CD4-positive, alpha-beta memory T cell (primary cell): ENCODE measurements at regions of chr18 and their contacts with region 1.

Region 1: DNA sequence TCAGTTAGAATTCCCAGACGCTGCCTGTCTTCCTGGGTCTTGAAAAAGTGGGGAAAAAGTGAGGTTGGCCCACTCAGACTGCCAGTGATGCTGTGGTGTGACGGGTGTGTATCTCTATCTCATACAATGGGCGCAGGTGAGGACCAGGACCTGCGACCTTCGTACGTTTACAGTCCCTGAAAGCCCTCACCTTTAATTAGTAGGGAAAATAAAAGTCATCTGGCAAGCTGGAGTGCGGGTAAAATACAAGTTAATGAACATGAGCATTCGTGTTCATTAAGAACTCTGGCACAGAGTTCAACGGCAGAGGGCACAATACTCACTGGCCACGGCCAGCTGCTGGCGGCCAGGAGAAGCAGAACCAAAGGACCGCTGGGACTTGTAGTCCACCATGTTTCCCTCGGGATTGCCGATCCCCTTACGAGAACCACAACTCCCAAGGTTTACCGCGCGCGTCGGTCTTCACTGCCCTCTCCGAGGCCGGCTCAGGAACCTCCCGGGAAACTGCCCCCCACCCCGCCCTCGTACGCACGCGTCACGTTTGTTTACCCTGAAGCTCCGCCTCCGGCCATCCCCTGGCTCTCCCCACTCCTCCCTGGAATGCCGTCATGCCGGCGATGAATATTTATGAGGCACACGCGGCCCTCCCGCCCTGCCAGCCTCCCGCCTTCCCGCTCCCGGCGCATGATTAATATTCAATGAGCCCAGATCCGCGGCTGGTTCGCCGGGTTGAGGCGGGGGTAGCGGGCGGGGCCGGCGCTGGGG is 488 bp upstream of the PHLPP1 start:
- DNase-seq: peak; percentile 89 to 93 (median 92)
- H3K4me3 ChIP-seq: peak overlapping the region; percentile 8 to 71
- H3K4me3 Mint-ChIP-seq: peak overlapping the region; percentile 87 to 97 (median 92)
- H3K27ac ChIP-seq: peak overlapping the region; percentile 76
- H3K27ac Mint-ChIP-seq: peak overlapping the region; percentile 93 to 99 (median 98)
- H3K4me1 ChIP-seq: peaks cover 25% of the 10 kb centered on the region
- H3K4me1 Mint-ChIP-seq: peaks cover 19 to 39% (median 24%) of the 10 kb centered on the region in 4 donors
- H3K27me3 ChIP-seq: no peaks in the 10 kb centered on the region
- H3K27me3 Mint-ChIP-seq: no peaks in the 10 kb centered on the region

Region 2: DNA sequence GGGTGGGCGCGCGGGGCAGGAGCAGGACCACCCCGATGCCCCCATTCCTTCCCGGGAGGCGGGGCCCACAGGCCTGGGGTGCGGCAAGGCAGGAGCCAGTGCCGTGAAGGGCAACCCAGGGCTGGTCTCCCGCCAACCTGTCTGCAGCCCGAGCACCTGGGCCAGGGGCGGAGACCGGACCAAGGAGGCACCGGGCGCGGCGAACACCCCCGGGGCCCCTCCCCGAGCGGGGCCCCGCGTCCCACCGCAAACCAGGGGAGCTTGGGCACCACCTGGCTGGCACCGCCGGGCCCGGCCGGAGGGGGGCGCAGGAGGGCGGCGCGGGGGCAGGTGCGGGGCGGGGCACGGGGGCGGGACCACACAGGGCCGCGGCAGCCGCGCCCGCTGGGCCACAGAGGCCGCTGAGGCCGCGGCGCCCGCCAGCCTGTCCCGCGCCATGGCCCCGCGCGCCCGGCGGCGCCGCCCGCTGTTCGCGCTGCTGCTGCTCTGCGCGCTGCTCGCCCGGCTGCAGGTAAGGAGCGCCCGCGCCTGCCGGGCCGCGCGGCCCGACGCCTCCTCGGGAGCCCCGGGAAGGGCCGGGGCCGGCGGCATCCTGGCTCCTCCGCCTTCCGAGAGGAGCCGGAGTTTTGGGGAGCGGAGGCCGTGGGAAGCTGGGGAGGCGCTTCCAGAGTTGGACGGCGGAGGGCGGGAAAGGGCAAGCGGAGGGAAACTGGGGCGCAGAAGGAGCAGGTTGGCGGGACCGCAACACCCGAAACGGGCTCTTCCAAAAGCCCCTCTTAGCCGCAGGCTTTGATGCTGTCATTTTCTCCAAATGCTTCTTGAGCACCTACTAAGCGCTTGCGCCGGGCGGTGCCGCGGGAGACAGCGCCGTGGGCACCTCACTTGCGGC is 389.7 kb before region 1 on chr18 and contains the start of gene TNFRSF11A:
- CTCF ChIA-PET with region 1: no interaction called
- POLR2A ChIA-PET with region 1: no interaction called
- intact Hi-C with region 1: loop called (anchors 1 kb)
- DNase-seq: peak; percentile 46 to 60 (median 51)
- H3K4me3 ChIP-seq: peak within 1 kb of the TSS; percentile 22 to 58
- H3K4me3 Mint-ChIP-seq: peak within 1 kb of the TSS; percentile 70 to 92 (median 86)
- H3K27ac ChIP-seq: no peak within 1 kb of the TSS
- H3K27ac Mint-ChIP-seq: peak within 1 kb of the TSS in 5 of 7 donors; percentile 20 to 91 (median 82)
- H3K4me1 ChIP-seq: peaks cover 19% of the 10 kb centered on the region
- H3K4me1 Mint-ChIP-seq: peaks cover 15 to 40% (median 26%) of the 10 kb centered on the region in 4 donors
- H3K27me3 ChIP-seq: peaks cover 35% of the 10 kb centered on the region
- H3K27me3 Mint-ChIP-seq: peaks cover 53 to 57% of the 10 kb centered on the region in 2 donors
- total RNA-seq, gene TNFRSF11A: 1.3 TPM

Region 3: GRCh38 chr18:62522504-62523254 is 192.2 kb before region 1 on chr18 and contains the start of gene ZCCHC2:
- CTCF ChIA-PET with region 1: no interaction called
- POLR2A ChIA-PET with region 1: interaction called, 23 read pairs
- intact Hi-C with region 1: loop called (anchors 1 kb)
- DNase-seq: peak; percentile 97 to 100 (median 98)
- H3K4me3 ChIP-seq: peak within 1 kb of the TSS; percentile 38 to 98
- H3K4me3 Mint-ChIP-seq: peak within 1 kb of the TSS; percentile 90 to 99 (median 96)
- H3K27ac ChIP-seq: peak within 1 kb of the TSS; percentile 93
- H3K27ac Mint-ChIP-seq: peak within 1 kb of the TSS; percentile 80 to 96 (median 87)
- H3K4me1 ChIP-seq: peaks cover 34% of the 10 kb centered on the region
- H3K4me1 Mint-ChIP-seq: peaks cover 21 to 45% (median 32%) of the 10 kb centered on the region in 4 donors
- H3K27me3 ChIP-seq: no peaks in the 10 kb centered on the region
- H3K27me3 Mint-ChIP-seq: no peaks in the 10 kb centered on the region
- total RNA-seq, gene ZCCHC2: 51.7 to 52.2 TPM

Region 4: GRCh38 chr18:62957885-62958472 is 243.1 kb after region 1 on chr18:
- CTCF ChIA-PET with region 1: interaction called, 8 read pairs
- POLR2A ChIA-PET with region 1: interaction called, 3 read pairs
- intact Hi-C with region 1: loop called (anchors 1 kb)
- DNase-seq: peak; percentile 18 to 35 (median 33)
- H3K4me3 ChIP-seq: no peak overlapping the region
- H3K4me3 Mint-ChIP-seq: no peak overlapping the region
- H3K27ac ChIP-seq: no peak overlapping the region
- H3K27ac Mint-ChIP-seq: no peak overlapping the region
- H3K4me1 ChIP-seq: no peaks in the 10 kb centered on the region
- H3K4me1 Mint-ChIP-seq: peaks cover 0 to 9% (median 1%) of the 10 kb centered on the region in 4 donors
- H3K27me3 ChIP-seq: no peaks in the 10 kb centered on the region
- H3K27me3 Mint-ChIP-seq: no peaks in the 10 kb centered on the region

Region 5: GRCh38 chr18:63339920-63340484 is 625.1 kb after region 1 on chr18:
- CTCF ChIA-PET with region 1: no interaction called
- POLR2A ChIA-PET with region 1: no interaction called
- intact Hi-C with region 1: loop called (anchors 2 kb)
- DNase-seq: peak in 4 of 5 donors; percentile 43 to 51 (median 49)
- H3K4me3 ChIP-seq: no peak overlapping the region
- H3K4me3 Mint-ChIP-seq: no peak overlapping the region
- H3K27ac ChIP-seq: no peak overlapping the region
- H3K27ac Mint-ChIP-seq: peak overlapping the region in 3 of 7 donors; percentile 43 to 69 (median 69)
- H3K4me1 ChIP-seq: no peaks in the 10 kb centered on the region
- H3K4me1 Mint-ChIP-seq: peaks cover 0 to 7% (median 1%) of the 10 kb centered on the region in 4 donors
- H3K27me3 ChIP-seq: no peaks in the 10 kb centered on the region
- H3K27me3 Mint-ChIP-seq: no peaks in the 10 kb centered on the region

Region 6: DNA sequence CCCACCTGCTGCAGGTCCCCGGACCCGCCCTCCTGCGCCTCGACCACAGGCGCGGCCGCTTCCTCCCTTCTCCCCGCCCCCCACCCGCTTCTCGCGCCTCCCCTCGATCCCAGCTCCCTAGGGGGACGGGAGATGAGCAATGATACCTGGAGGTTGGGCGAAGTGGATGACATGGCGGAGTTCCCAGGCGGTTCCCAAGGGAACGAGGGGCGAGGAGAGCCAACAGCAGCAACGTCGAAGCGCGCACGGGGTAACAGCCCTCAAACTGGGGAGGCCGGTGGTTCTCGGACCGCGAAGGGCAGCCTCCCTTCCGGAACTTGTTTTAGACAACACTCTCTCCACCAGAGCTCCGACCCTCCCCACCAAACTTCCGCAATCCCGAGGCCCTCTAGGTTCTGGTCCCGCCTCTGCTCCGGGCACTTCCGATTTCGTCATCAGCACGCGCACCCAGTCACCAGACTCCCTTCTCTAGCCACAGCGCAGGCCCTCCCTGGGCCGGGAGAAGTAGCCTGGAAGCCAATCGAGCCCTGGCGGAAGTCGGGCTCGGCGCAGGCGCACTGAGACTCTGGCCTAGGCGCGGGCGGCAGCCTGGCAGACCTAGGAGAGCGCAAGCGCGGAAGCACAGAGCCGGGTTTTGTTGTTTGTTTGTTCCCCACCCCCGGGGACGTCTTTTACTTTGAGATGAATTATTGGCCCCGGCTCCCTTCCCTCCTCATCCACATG is 707.4 kb after region 1 on chr18 and contains the start of gene VPS4B:
- CTCF ChIA-PET with region 1: no interaction called
- POLR2A ChIA-PET with region 1: interaction called, 22 read pairs
- intact Hi-C with region 1: loop called (anchors 1 kb)
- DNase-seq: peak; percentile 99 to 100 (median 100)
- H3K4me3 ChIP-seq: peak within 1 kb of the TSS; percentile 73 to 98
- H3K4me3 Mint-ChIP-seq: peak within 1 kb of the TSS; percentile 94 to 100 (median 96)
- H3K27ac ChIP-seq: peak within 1 kb of the TSS; percentile 98
- H3K27ac Mint-ChIP-seq: peak within 1 kb of the TSS; percentile 94 to 99 (median 97)
- H3K4me1 ChIP-seq: peaks cover 55% of the 10 kb centered on the region
- H3K4me1 Mint-ChIP-seq: peaks cover 19 to 29% (median 21%) of the 10 kb centered on the region in 4 donors
- H3K27me3 ChIP-seq: no peaks in the 10 kb centered on the region
- H3K27me3 Mint-ChIP-seq: peaks cover 3 to 5% of the 10 kb centered on the region in 2 donors
- total RNA-seq, gene VPS4B: 93.0 to 94.9 TPM

Region 7: GRCh38 chr18:63969960-63970802 is 1255.3 kb after region 1 on chr18 and contains the start of gene SERPINB8:
- CTCF ChIA-PET with region 1: no interaction called
- POLR2A ChIA-PET with region 1: interaction called, 4 read pairs
- intact Hi-C with region 1: loop called (anchors 1 kb)
- DNase-seq: peak; percentile 73 to 89 (median 77)
- H3K4me3 ChIP-seq: peak within 1 kb of the TSS; percentile 64 to 86
- H3K4me3 Mint-ChIP-seq: peak within 1 kb of the TSS; percentile 87 to 99 (median 96)
- H3K27ac ChIP-seq: peak within 1 kb of the TSS; percentile 90
- H3K27ac Mint-ChIP-seq: peak within 1 kb of the TSS; percentile 82 to 98 (median 96)
- H3K4me1 ChIP-seq: peaks cover 16% of the 10 kb centered on the region
- H3K4me1 Mint-ChIP-seq: peaks cover 22 to 37% (median 25%) of the 10 kb centered on the region in 4 donors
- H3K27me3 ChIP-seq: no peaks in the 10 kb centered on the region
- H3K27me3 Mint-ChIP-seq: no peaks in the 10 kb centered on the region
- total RNA-seq, gene SERPINB8: 13.8 to 16.3 TPM